Heart right ventricle (tissue), 16 donors: ENCODE measurements at regions of chr15 and their contacts with region 1.

Region 1: GRCh38 chr15:85831415-85832113 is 36.8 kb upstream of the KLHL25 start:
- DNase-seq: peak; percentile 47 to 66
- ATAC-seq: peak; percentile 82 to 94 (median 87)
- H3K4me3 ChIP-seq: no peak overlapping the region
- H3K27ac ChIP-seq: no peak overlapping the region
- H3K4me1 ChIP-seq: peaks cover 0 to under 1% (median 0%) of the 10 kb centered on the region in 9 donors
- H3K27me3 ChIP-seq: peaks cover 0 to 3% (median 0%) of the 10 kb centered on the region in 7 donors
- CTCF ChIP-seq: peak; percentile 37 to 76 (median 65)

Region 2: GRCh38 chr15:85475317-85475701 is 356.3 kb before region 1 on chr15:
- intact Hi-C with region 1: loop called in 4 of 10 experiments (anchors 10 kb)
- DNase-seq: no peak
- ATAC-seq: peak in 2 of 8 donors; percentile 6 to 7
- H3K4me3 ChIP-seq: no peak overlapping the region
- H3K27ac ChIP-seq: peak overlapping the region in 2 of 10 donors; percentile 9 to 11
- H3K4me1 ChIP-seq: peaks cover 25 to 98% (median 85%) of the 10 kb centered on the region in 9 donors
- H3K27me3 ChIP-seq: no peaks in the 10 kb centered on the region
- CTCF ChIP-seq: no peak

Region 3: DNA sequence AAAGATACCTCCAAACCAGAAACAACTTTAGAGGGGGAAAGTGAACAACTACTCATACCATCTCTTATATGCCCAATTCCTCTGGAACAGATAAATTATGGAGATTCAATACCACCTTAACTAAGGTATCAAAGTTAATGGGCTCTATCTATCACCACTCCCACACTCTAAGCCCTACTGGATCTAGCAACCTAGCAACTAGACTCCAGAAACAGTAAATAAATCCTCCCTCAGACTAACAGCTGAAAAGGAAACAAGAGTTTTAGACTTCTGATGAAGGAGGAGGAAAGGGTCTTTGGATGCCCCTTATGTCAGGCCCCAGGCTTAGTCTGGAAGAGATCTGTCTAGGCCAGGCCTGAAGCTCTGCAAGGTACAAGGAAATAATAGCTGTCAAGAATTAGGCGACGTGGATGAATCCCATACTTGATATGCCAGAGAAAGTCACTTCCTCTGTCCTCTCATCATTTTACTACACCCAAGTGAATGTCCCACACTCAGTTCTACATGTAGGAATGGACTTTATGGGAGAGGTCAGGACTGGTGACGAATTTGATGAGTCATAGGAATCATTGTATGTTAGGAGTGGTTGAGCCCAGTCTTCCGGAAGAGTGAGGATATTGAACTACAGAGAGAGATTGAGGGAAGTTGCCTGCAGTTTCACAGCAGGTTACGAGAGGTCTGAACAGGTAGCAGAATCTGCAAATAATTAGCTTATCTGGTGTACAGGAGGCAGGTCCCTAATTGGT is 337.3 kb before region 1 on chr15:
- intact Hi-C with region 1: loop called in 4 of 10 experiments (anchors 10 kb)
- DNase-seq: no peak
- ATAC-seq: peak in 7 of 8 donors; percentile 68 to 92 (median 78)
- H3K4me3 ChIP-seq: no peak overlapping the region
- H3K27ac ChIP-seq: peak overlapping the region in 9 of 10 donors; percentile 13 to 66 (median 55)
- H3K4me1 ChIP-seq: peaks cover 10 to 91% (median 86%) of the 10 kb centered on the region in 9 donors
- H3K27me3 ChIP-seq: no peaks in the 10 kb centered on the region
- CTCF ChIP-seq: no peak

Region 4: DNA sequence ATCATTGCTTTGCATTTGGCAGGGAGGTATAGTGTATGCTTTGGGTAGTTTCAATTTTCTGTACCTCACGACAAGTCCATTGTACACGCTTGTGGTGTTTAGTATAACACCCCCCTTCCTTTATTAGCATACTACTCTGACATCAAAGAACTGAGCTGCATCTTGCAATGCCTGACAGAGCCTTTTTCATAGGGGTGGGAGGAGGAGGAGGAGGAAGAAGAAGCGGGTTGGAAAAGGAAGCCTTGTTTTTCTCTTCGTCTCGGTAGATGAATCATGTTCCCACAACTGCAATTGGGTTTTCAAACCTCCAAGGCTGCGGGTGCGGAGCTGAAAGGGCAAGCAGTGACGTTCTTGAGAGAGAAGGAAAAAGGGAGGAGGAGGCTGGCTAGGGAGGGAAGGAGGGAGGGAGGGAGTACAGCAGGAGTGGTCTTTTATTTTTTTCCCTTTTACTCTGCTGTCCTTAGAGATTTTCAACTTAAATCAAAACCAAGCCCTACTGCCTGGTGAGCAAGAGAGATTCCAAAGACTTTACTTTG is 212.5 kb before region 1 on chr15:
- intact Hi-C with region 1: loop called in 1 of 10 experiments (anchors 10 kb)
- DNase-seq: peak; percentile 59 to 86
- ATAC-seq: peak; percentile 65 to 84 (median 77)
- H3K4me3 ChIP-seq: peak overlapping the region; percentile 16 to 63 (median 53)
- H3K27ac ChIP-seq: peak overlapping the region; percentile 63 to 93 (median 83)
- H3K4me1 ChIP-seq: peaks cover 20 to 100% (median 98%) of the 10 kb centered on the region in 9 donors
- H3K27me3 ChIP-seq: no peaks in the 10 kb centered on the region
- CTCF ChIP-seq: no peak

Region 5: GRCh38 chr15:85760531-85761371 is 70.8 kb before region 1 on chr15:
- intact Hi-C with region 1: loop called in 3 of 10 experiments (anchors 5 to 10 kb)
- DNase-seq: no peak
- ATAC-seq: peak in 2 of 8 donors; percentile 10 to 12
- H3K4me3 ChIP-seq: no peak overlapping the region
- H3K27ac ChIP-seq: no peak overlapping the region
- H3K4me1 ChIP-seq: peaks cover 26 to 83% (median 55%) of the 10 kb centered on the region in 9 donors
- H3K27me3 ChIP-seq: no peaks in the 10 kb centered on the region
- CTCF ChIP-seq: peak in 6 of 9 donors; percentile 19 to 39 (median 32)

Region 6: DNA sequence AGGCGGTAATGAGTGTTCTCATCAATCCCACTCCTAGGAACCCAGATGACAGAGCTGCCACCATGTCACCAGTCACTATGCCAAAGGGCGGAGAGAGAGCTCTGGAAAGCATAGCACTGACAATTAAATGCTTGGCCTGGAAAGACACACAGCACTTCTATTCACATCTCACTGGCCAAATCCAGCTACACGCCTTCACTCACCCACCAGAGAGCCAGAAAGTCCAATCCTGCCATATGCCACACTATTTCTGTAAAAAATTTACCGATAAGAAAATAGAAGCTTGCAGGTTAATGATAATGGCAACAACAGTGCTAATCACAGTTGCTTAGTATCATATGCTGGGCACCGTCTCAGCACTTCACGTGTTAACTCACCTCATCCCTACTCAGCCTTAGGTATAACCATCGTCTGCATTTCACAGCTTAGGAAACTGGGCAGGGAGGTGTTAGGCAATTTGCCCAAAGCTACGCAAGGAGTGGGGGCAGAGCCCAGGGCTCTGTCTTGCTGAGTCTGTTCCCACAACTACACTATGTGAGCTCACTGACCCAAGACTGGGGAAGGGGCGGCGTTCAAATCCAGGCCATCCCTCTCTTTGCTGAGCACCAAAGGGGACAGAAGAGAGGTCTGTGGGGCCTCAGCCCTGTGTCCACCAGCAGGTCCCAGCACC is 53.3 kb before region 1 on chr15:
- intact Hi-C with region 1: no loop called
- DNase-seq: no peak
- ATAC-seq: peak; percentile 60 to 93 (median 82)
- H3K4me3 ChIP-seq: no peak overlapping the region
- H3K27ac ChIP-seq: peak overlapping the region in 9 of 10 donors; percentile 2 to 63 (median 39)
- H3K4me1 ChIP-seq: peaks cover 3 to 49% (median 31%) of the 10 kb centered on the region in 9 donors
- H3K27me3 ChIP-seq: no peaks in the 10 kb centered on the region
- CTCF ChIP-seq: no peak